ENCODE measurements at regions of chr4 and their contacts with region 1.

Region 1: GRCh38 chr4:96035727-96036126 is 195.8 kb downstream of the PDHA2 start:
- DNase-seq: no peak
- ATAC-seq: peak in 1 of 8 donors; percentile 47
- H3K4me3 ChIP-seq: no peak overlapping the region
- H3K27ac ChIP-seq: no peak overlapping the region
- H3K4me1 ChIP-seq: no peaks in the 10 kb centered on the region
- H3K27me3 ChIP-seq: no peaks in the 10 kb centered on the region
- CTCF ChIP-seq: peak in 8 of 9 donors; percentile 4 to 53 (median 45)

Region 2: DNA sequence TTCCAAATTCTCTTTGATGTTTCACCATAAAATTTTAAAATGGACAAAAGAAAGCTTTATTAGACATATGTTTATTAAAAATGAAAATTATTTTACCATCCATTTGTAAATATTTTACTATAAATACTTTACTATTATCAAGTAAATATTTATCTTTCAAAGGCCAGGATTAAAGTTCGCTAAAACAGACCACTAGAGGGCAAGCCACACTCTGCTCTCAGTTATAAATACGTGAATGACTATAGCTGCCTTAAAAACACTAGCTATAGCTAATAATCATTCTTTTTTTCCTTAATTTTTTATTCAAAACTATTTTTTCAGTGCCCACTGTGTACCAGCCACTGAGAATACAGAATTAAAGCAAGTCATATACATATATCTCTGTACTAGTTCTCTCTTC is 525.6 kb before region 1 on chr4:
- intact Hi-C with region 1: loop called in 1 of 10 experiments (anchors 5 kb)
- DNase-seq: no peak
- ATAC-seq: peak in 2 of 8 donors; percentile 28 to 62
- H3K4me3 ChIP-seq: no peak overlapping the region
- H3K27ac ChIP-seq: no peak overlapping the region
- H3K4me1 ChIP-seq: peaks cover 0 to 6% (median 0%) of the 10 kb centered on the region in 9 donors
- H3K27me3 ChIP-seq: peaks cover 0 to 2% (median 0%) of the 10 kb centered on the region in 7 donors
- CTCF ChIP-seq: peak; percentile 37 to 72 (median 65)

Region 3: GRCh38 chr4:95909211-95909610 is 126.5 kb before region 1 on chr4:
- intact Hi-C with region 1: no loop called
- DNase-seq: no peak
- ATAC-seq: no peak
- H3K4me3 ChIP-seq: no peak overlapping the region
- H3K27ac ChIP-seq: no peak overlapping the region
- H3K4me1 ChIP-seq: no peaks in the 10 kb centered on the region
- H3K27me3 ChIP-seq: no peaks in the 10 kb centered on the region
- CTCF ChIP-seq: no peak